Activated CD8-positive, alpha-beta T cell treated with anti-CD3 and anti-CD28 coated beads, Interleukin-2, amount 10 ng/mL, durations not matched to agents 7 days and 5 days (primary cell): ENCODE measurements at regions of chr17 and their contacts with region 1.

Region 1: GRCh38 chr17:996554-997344 is at the start of gene TIMM22:
- DNase-seq: peak; percentile 95
- ATAC-seq: peak; percentile 98
- H3K4me3 Mint-ChIP-seq: peak within 1 kb of the TSS; percentile 89
- H3K27ac Mint-ChIP-seq: peak within 1 kb of the TSS; percentile 95
- H3K4me1 Mint-ChIP-seq: peaks cover 23% of the 10 kb centered on the region
- H3K27me3 Mint-ChIP-seq: no peaks in the 10 kb centered on the region
- total RNA-seq, gene TIMM22: 10.0 to 10.4 TPM

Region 2: GRCh38 chr17:781805-782731 is 214.7 kb before region 1 on chr17 and contains the starts of genes GLOD4 and MRM3:
- CTCF ChIA-PET with region 1: interaction called, 11 read pairs
- POLR2A ChIA-PET with region 1: interaction called, 9 read pairs
- DNase-seq: peak; percentile 94
- ATAC-seq: peak; percentile 94
- H3K4me3 Mint-ChIP-seq: peak within 1 kb of the TSS; percentile 96
- H3K27ac Mint-ChIP-seq: peak within 1 kb of the TSS; percentile 96
- H3K4me1 Mint-ChIP-seq: peaks cover 32% of the 10 kb centered on the region
- H3K27me3 Mint-ChIP-seq: no peaks in the 10 kb centered on the region
- total RNA-seq, gene GLOD4: 57.5 to 59.1 TPM
- total RNA-seq, gene MRM3: 19.4 to 19.6 TPM

Region 3: GRCh38 chr17:794876-795275 is 201.9 kb before region 1 on chr17:
- CTCF ChIA-PET with region 1: interaction called, 14 read pairs
- POLR2A ChIA-PET with region 1: no interaction called
- DNase-seq: peak; percentile 62
- ATAC-seq: peak; percentile 74
- H3K4me3 Mint-ChIP-seq: no peak overlapping the region
- H3K27ac Mint-ChIP-seq: no peak overlapping the region
- H3K4me1 Mint-ChIP-seq: peaks cover 7% of the 10 kb centered on the region
- H3K27me3 Mint-ChIP-seq: no peaks in the 10 kb centered on the region

Region 4: GRCh38 chr17:879549-880442 is 117.0 kb before region 1 on chr17:
- CTCF ChIA-PET with region 1: interaction called, 15 read pairs
- POLR2A ChIA-PET with region 1: interaction called, 4 read pairs
- DNase-seq: peak; percentile 79
- ATAC-seq: peak; percentile 55
- H3K4me3 Mint-ChIP-seq: no peak overlapping the region
- H3K27ac Mint-ChIP-seq: no peak overlapping the region
- H3K4me1 Mint-ChIP-seq: peaks cover 22% of the 10 kb centered on the region
- H3K27me3 Mint-ChIP-seq: peaks cover 21% of the 10 kb centered on the region

Region 5: GRCh38 chr17:1055751-1056645 is 59.2 kb after region 1 on chr17:
- CTCF ChIA-PET with region 1: interaction called, 14 read pairs
- POLR2A ChIA-PET with region 1: no interaction called
- DNase-seq: peak; percentile 62
- ATAC-seq: peak; percentile 71
- H3K4me3 Mint-ChIP-seq: no peak overlapping the region
- H3K27ac Mint-ChIP-seq: peak overlapping the region; percentile 32
- H3K4me1 Mint-ChIP-seq: peaks cover 4% of the 10 kb centered on the region
- H3K27me3 Mint-ChIP-seq: no peaks in the 10 kb centered on the region